ENCODE measurements at regions of chr20 and their contacts with region 1.

Region 1: DNA sequence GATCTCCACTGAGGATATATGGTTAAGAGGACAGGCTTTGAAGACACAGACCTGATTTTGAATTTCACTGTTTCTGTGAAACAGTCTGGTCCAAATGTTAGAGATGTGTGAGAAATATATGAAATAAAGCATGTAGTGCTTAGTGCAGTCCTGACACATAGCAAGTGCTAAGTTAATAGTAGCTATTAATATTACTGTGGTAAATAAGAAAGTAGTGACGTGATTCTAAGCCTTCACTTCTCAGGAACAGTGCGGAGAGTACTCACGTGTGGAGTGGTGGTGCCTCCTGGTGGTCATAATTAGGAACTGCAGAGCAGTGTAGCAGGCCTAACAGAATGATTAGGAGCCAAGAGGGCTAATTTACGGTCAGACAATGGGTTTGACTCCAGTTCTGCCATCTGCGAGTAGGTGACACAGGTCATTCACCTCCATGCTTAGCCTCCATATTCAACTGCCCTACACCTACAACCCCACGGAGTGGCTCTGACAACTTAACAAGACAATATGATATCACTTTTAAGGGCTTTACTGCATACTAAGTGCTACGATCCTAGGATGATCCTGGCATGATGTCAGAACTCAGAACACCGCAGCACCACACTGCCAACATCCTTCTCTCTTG is 106.2 kb downstream of the JPH2 start:
- DNase-seq: peak; percentile 76
- H3K4me3 ChIP-seq: no peak overlapping the region
- H3K27ac ChIP-seq: no peak overlapping the region
- H3K4me1 ChIP-seq: no peaks in the 10 kb centered on the region
- CTCF ChIP-seq: peak; percentile 99

Region 2: GRCh38 chr20:43448748-43449535 is 631.8 kb before region 1 on chr20:
- CTCF ChIA-PET with region 1: no interaction called
- POLR2A ChIA-PET with region 1: interaction called, 3 read pairs
- intact Hi-C with region 1: loop called (anchors 1 kb)
- DNase-seq: peak; percentile 65
- H3K4me3 ChIP-seq: no peak overlapping the region
- H3K27ac ChIP-seq: no peak overlapping the region
- H3K4me1 ChIP-seq: no peaks in the 10 kb centered on the region
- CTCF ChIP-seq: peak; percentile 89

Region 3: GRCh38 chr20:43472671-43473380 is 607.9 kb before region 1 on chr20:
- CTCF ChIA-PET with region 1: no interaction called
- POLR2A ChIA-PET with region 1: no interaction called
- intact Hi-C with region 1: no loop called
- DNase-seq: no peak
- H3K4me3 ChIP-seq: no peak overlapping the region
- H3K27ac ChIP-seq: no peak overlapping the region
- H3K4me1 ChIP-seq: no peaks in the 10 kb centered on the region
- CTCF ChIP-seq: 0 out of 2 replicates have a peak, but pooled peaks have one; percentile 28

Region 4: DNA sequence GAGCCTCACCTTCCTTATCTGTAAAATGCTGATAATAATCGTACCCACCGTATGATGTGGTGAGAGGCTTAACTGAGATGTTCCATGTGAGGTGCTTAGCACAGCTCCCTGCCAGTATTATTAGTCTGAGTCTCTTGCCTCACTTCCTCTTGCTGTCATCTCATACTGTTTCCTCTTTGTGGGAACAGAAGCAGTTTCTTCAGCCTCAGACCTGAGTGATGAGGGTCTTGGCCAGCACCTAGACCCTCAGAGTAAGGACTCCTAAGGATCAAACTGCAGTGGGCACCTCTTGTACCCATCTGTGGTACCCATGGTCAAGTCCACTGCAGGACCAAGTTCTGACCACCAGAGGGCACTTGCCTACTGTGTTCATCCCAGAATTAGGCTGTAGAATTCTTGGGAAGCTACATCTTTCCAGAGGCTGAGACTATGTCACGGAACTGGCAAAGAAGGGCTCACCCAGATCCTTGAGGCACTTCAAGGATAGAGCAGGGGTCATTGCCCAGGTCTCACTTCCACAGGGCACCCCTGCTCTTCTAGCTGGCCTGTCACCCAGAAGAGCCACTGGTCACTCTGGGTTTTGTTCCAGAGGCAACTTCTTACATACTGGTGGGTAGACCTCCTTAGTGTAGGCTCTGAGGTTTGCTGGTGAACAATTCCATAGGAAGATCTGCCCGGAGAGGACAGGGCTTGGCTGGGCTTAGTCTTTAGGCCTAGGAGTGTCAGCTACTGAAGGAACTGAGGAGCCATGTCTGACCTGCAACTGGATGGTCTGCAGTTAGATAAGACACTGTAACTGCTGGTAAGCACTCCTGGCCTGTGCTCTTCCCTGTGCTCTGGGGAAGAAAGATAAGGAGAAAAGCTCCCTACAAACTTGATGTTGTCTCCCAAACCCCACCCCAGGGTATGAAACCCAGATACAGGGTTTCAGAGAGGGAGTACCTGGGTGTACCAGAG is 542.6 kb before region 1 on chr20:
- CTCF ChIA-PET with region 1: no interaction called
- POLR2A ChIA-PET with region 1: no interaction called
- intact Hi-C with region 1: loop called (anchors 1 kb)
- DNase-seq: peak; percentile 58
- H3K4me3 ChIP-seq: no peak overlapping the region
- H3K27ac ChIP-seq: no peak overlapping the region
- H3K4me1 ChIP-seq: no peaks in the 10 kb centered on the region
- CTCF ChIP-seq: peak; percentile 94

Region 5: GRCh38 chr20:43749734-43750294 is 330.9 kb before region 1 on chr20:
- CTCF ChIA-PET with region 1: interaction called, 7 read pairs
- POLR2A ChIA-PET with region 1: no interaction called
- intact Hi-C with region 1: loop called (anchors 1 kb)
- DNase-seq: peak; percentile 73
- H3K4me3 ChIP-seq: no peak overlapping the region
- H3K27ac ChIP-seq: no peak overlapping the region
- H3K4me1 ChIP-seq: peaks cover 51% of the 10 kb centered on the region
- CTCF ChIP-seq: peak; percentile 98

Measured in OCI-LY7 (cell line).